ENCODE measurements at regions of chr4 and their contacts with region 1.

Region 1: GRCh38 chr4:75469896-75470295 is 44.3 kb downstream of the RCHY1 start:
- DNase-seq: no peak
- ATAC-seq: no peak
- H3K4me3 ChIP-seq: no peak overlapping the region
- H3K27ac ChIP-seq: no peak overlapping the region
- H3K4me1 ChIP-seq: no peaks in the 10 kb centered on the region
- H3K27me3 ChIP-seq: no peaks in the 10 kb centered on the region
- CTCF ChIP-seq: no peak
- POLR2A ChIP-seq: no peak
- RAD21 ChIP-seq: no peak

Region 2: DNA sequence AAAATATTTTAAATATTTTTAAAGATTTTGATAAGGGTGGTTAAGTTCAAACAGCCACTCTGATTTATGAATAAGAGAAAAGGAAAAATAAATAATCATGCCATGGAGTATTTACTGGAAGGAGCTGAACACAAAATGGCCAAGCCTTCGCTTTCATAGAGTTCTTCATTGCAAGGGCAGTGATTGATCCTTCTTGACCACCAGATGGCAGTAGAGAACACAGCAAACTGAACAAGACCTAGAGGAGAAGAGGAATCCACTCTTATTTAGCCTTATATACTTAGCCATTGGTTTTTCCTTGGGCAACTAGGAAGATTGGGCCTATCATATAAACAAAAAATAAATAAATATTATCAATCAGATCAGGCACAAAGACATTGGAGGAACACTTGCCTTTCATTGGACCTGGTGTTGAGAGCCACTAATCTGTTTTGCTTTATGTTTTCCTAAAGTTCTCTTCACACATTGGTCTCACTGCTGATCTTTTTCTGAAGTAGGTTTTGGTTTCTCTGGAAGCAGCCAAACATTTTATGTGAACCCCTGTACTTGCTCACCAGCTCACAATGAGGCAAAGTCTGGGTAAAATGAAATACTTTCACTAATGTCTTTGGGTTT is 595.0 kb before region 1 on chr4:
- CTCF ChIA-PET with region 1: interaction called, 12 read pairs
- POLR2A ChIA-PET with region 1: no interaction called
- RAD21 ChIA-PET with region 1: no interaction called
- intact Hi-C with region 1: loop called (anchors 5 kb)
- DNase-seq: peak; percentile 73
- ATAC-seq: peak; percentile 97
- H3K4me3 ChIP-seq: no peak overlapping the region
- H3K27ac ChIP-seq: no peak overlapping the region
- H3K4me1 ChIP-seq: no peaks in the 10 kb centered on the region
- H3K27me3 ChIP-seq: no peaks in the 10 kb centered on the region
- CTCF ChIP-seq: peak; percentile 71 to 93 (median 88); a peak in 5 of 6 replicates
- POLR2A ChIP-seq: no peak
- RAD21 ChIP-seq: peak; percentile 76

Region 3: DNA sequence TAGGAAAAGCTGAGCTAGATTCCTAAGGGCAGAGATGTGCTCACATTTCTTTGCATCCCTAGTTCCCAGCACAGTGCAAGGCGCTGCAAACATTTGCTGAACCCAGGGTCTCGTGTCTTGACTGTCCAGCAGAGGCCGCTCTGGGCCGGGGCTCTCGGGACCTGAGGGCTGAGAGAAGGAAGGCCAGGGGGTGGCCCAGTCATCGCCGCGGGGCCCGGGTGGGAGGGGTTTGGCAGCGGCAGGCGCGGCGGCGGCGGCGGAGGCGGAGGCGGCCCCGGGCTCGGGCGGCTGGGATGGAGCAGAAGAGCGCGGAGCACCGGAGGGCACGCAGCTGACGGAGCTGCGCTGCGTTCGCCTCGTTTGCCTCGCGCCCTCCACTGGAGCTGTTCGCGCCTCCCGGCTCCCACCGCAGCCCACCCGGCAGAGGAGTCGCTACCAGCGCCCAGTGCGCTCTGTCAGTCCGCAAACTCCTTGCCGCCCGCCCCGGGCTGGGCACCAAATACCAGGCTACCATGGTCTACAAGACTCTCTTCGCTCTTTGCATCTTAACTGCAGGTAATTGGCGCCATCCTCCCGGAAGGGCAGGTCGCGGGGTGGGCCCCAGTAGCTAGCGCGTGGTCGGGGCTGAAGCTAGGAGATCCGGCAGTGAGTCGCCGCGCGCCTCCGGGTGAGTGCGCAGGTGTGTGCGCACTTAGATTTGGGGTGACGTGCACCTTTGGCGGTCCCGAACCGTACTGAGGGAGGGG is 536.9 kb before region 1 on chr4 and contains the start of gene PARM1:
- CTCF ChIA-PET with region 1: interaction called, 7 read pairs
- POLR2A ChIA-PET with region 1: no interaction called
- RAD21 ChIA-PET with region 1: interaction called in 1 of 2 experiments, 3 read pairs
- intact Hi-C with region 1: loop called (anchors 2 kb)
- DNase-seq: peak; percentile 81
- ATAC-seq: peak; percentile 96
- H3K4me3 ChIP-seq: peak within 1 kb of the TSS; percentile 74 to 84
- H3K27ac ChIP-seq: peak within 1 kb of the TSS; percentile 30; the same call in 1 of the 2 replicates
- H3K4me1 ChIP-seq: peaks cover 0 to 17% of the 10 kb centered on the region in 2 experiments; a peak in 1 of 4 replicates
- H3K27me3 ChIP-seq: no peaks in the 10 kb centered on the region
- CTCF ChIP-seq: peak; percentile 82 to 84 (median 83)
- POLR2A ChIP-seq: no peak
- RAD21 ChIP-seq: peak; percentile 94
- total RNA-seq, gene PARM1: 11.7 TPM